ENCODE measurements at regions of chr21 and their contacts with region 1.

Region 1: GRCh38 chr21:29639366-29640079 is 300.3 kb downstream of the GRIK1 start:
- H3K4me3 Mint-ChIP-seq: peak overlapping the region; percentile 26
- H3K27ac Mint-ChIP-seq: peak overlapping the region; percentile 77
- H3K4me1 Mint-ChIP-seq: peaks cover 34% of the 10 kb centered on the region
- H3K27me3 Mint-ChIP-seq: no peaks in the 10 kb centered on the region

Region 2: DNA sequence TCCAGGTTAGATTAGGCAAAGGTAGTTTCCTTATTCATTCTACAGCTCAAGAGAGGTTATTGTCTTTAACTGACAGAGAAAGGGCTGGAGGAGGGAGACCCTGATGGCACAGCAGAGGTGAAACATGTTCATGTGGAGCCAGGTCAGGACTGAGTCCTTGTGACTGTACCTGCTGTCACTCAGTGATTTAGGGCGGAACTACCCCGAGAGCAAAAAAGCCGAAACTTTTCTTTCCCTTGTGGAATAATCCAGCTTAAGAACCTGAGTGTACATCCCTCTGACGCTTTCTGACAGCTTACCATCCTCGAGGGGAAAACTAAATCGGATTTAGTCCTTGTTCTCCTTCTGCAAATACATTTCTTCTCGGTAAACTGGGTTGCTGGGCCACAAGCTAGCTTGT is 67.6 kb before region 1 on chr21:
- intact Hi-C with region 1: loop called (anchors 5 kb)
- H3K4me3 Mint-ChIP-seq: no peak overlapping the region
- H3K27ac Mint-ChIP-seq: no peak overlapping the region
- H3K4me1 Mint-ChIP-seq: peaks cover 5% of the 10 kb centered on the region
- H3K27me3 Mint-ChIP-seq: no peaks in the 10 kb centered on the region

Region 3: DNA sequence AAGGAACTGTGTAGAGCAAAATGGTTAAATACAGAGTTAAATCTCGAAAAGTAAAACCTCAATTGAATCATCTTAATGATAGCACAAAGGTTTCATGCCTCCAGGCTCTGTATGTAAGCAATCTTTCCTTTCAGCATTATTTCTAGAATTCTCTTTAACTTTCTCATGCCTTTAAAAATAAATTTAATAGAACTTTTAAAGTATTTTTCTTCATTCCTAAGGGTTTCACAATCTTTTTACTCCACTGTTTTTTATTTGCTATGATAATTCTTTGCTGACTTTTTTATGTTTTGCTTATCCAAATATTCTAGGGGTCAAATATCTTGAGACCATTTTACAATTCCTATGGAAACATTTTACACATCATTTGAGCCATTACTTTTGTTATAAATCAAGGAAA is 52.8 kb before region 1 on chr21:
- intact Hi-C with region 1: no loop called
- H3K4me3 Mint-ChIP-seq: no peak overlapping the region
- H3K27ac Mint-ChIP-seq: no peak overlapping the region
- H3K4me1 Mint-ChIP-seq: no peaks in the 10 kb centered on the region
- H3K27me3 Mint-ChIP-seq: no peaks in the 10 kb centered on the region

Measured in dendritic cell treated with granulocyte-macrophage colony-stimulating factor and Interleukin-4, amounts not matched to agents 40 ng/mL and 50 ng/mL, for 4 days (primary cell).